CD4-positive, alpha-beta T cell (primary cell): ENCODE measurements at regions of chr4 and their contacts with region 1.

Region 1: DNA sequence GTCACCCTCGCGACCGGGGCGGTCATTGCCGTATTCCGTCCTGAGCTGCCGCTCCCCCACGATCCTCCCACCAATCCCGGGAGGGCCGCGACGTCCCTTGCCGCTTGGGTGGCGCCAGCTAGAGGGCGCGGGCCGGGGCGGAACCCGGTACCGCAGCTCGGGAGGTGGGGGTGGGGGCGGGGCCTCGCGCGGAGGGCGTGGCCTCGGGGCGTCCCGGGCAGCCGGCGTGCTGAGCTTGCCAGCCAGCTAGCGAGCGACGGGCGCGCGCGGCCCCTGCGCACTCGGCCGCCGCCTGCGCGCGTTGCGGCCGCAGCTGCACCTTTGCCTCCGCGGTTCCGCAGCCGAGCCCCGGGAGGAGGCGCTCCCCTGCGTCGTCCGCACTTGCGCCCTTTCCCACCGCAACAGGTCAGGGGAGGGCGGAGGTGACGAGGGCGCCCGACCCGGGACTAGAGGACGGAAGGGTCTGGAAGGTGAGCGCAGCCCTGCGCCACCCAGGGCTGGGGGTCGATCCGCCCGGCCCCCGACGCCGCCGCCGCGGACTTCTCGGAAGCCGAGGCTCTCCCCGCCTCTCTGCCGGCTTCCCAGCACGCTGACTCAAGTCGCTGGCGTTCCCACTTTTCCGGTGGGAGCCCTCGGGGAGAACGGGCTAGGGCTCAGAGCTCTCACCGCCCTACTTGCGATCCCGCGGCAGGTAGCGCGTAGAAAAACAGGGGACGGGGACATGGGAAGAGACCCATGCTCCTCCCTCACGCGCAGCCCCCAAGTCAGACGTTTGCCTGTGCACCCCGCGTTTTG is at the start of gene AFF1:
- DNase-seq: peak; percentile 73 to 98 (median 82)
- ATAC-seq: peak; percentile 65
- H3K4me3 ChIP-seq: peak within 1 kb of the TSS; percentile 93
- H3K4me3 Mint-ChIP-seq: peak within 1 kb of the TSS; percentile 96
- H3K27ac ChIP-seq: peak within 1 kb of the TSS; percentile 81
- H3K27ac Mint-ChIP-seq: peak within 1 kb of the TSS; percentile 94
- H3K4me1 ChIP-seq: peaks cover 30% of the 10 kb centered on the region
- H3K4me1 Mint-ChIP-seq: peaks cover 52% of the 10 kb centered on the region
- H3K27me3 ChIP-seq: no peaks in the 10 kb centered on the region
- H3K27me3 Mint-ChIP-seq: no peaks in the 10 kb centered on the region
- CTCF ChIP-seq: peak; percentile 47
- total RNA-seq, gene AFF1: 50.3 to 51.2 TPM

Region 2: GRCh38 chr4:86557526-86557925 is 377.4 kb before region 1 on chr4:
- CTCF ChIA-PET with region 1: no interaction called
- POLR2A ChIA-PET with region 1: no interaction called
- intact Hi-C with region 1: no loop called
- DNase-seq: no peak
- ATAC-seq: no peak
- H3K4me3 ChIP-seq: no peak overlapping the region
- H3K4me3 Mint-ChIP-seq: no peak overlapping the region
- H3K27ac ChIP-seq: no peak overlapping the region
- H3K27ac Mint-ChIP-seq: no peak overlapping the region
- H3K4me1 ChIP-seq: peaks cover 6% of the 10 kb centered on the region
- H3K4me1 Mint-ChIP-seq: peaks cover 11% of the 10 kb centered on the region
- H3K27me3 ChIP-seq: no peaks in the 10 kb centered on the region
- H3K27me3 Mint-ChIP-seq: no peaks in the 10 kb centered on the region
- CTCF ChIP-seq: no peak

Region 3: GRCh38 chr4:86831262-86832130 is 103.5 kb before region 1 on chr4:
- CTCF ChIA-PET with region 1: no interaction called
- POLR2A ChIA-PET with region 1: no interaction called
- intact Hi-C with region 1: no loop called
- DNase-seq: no peak
- ATAC-seq: no peak
- H3K4me3 ChIP-seq: no peak overlapping the region
- H3K4me3 Mint-ChIP-seq: no peak overlapping the region
- H3K27ac ChIP-seq: no peak overlapping the region
- H3K27ac Mint-ChIP-seq: no peak overlapping the region
- H3K4me1 ChIP-seq: no peaks in the 10 kb centered on the region
- H3K4me1 Mint-ChIP-seq: no peaks in the 10 kb centered on the region
- H3K27me3 ChIP-seq: no peaks in the 10 kb centered on the region
- H3K27me3 Mint-ChIP-seq: no peaks in the 10 kb centered on the region
- CTCF ChIP-seq: no peak

Region 4: DNA sequence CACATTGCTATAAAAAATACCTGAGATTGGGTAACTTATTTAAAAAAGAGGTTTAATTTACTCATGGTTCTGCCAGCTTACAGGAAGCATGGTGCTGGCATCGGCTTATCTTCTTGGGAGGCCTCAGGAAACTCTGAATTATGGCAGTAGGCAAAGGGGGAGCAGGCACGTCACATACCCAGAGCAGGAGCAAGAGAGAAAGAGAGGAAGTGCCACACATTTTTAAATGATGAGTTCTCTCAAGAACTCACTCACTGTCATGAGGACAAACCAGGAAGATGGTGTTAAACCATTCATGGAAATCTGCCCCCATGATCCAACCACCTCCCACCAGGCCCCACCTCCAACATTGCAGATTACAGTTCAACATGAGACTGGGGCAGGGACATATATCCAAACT is 10.2 kb before region 1 on chr4:
- CTCF ChIA-PET with region 1: interaction called, 48 read pairs
- POLR2A ChIA-PET with region 1: interaction called, 38 read pairs
- intact Hi-C with region 1: no loop called
- DNase-seq: no peak
- ATAC-seq: no peak
- H3K4me3 ChIP-seq: no peak overlapping the region
- H3K4me3 Mint-ChIP-seq: no peak overlapping the region
- H3K27ac ChIP-seq: no peak overlapping the region
- H3K27ac Mint-ChIP-seq: no peak overlapping the region
- H3K4me1 ChIP-seq: peaks cover 2% of the 10 kb centered on the region
- H3K4me1 Mint-ChIP-seq: peaks cover 4% of the 10 kb centered on the region
- H3K27me3 ChIP-seq: no peaks in the 10 kb centered on the region
- H3K27me3 Mint-ChIP-seq: no peaks in the 10 kb centered on the region
- CTCF ChIP-seq: no peak

Region 5: DNA sequence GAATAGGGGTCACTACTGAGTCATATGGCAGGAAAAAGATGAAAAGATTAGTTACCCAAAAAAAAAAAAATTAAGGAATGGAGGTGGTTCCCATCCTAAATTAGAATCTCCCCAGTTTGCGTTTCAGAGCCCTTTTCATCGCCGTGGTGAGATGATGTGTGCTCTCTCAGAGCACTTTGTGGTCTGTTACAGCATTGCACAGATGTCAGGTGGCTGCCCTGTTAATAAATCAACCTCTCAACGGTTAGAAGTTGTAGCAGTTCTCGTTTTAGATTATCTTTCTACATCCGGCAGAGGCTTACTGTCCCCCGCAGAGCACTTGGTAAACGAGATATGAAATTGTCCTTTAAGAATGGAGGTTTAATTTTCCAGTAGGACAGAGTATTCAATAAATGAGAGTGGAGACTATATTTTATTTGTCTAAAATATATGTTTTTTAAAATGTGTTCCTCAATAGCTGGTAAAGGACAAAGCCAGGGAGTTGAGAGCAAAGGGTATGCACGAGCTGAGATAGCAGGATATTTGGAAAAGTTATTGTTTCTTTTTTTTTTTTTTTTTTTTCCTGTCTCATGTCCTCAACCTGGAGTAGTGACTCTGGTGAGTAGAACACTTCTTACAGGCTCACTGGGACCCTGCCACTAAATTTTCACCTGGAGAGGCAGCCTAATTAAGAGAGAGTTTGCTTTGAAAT is 26.8 kb after region 1 on chr4:
- CTCF ChIA-PET with region 1: interaction called, 4 read pairs
- POLR2A ChIA-PET with region 1: interaction called, 3 read pairs
- intact Hi-C with region 1: loop called in 1 of 2 experiments (anchors 2 kb)
- DNase-seq: peak in 2 of 14 experiments; percentile 25 to 33
- ATAC-seq: peak; percentile 78
- H3K4me3 ChIP-seq: no peak overlapping the region
- H3K4me3 Mint-ChIP-seq: peak overlapping the region; percentile 3
- H3K27ac ChIP-seq: no peak overlapping the region
- H3K27ac Mint-ChIP-seq: no peak overlapping the region
- H3K4me1 ChIP-seq: no peaks in the 10 kb centered on the region
- H3K4me1 Mint-ChIP-seq: peaks cover 51% of the 10 kb centered on the region
- H3K27me3 ChIP-seq: no peaks in the 10 kb centered on the region
- H3K27me3 Mint-ChIP-seq: no peaks in the 10 kb centered on the region
- CTCF ChIP-seq: no peak

Region 6: GRCh38 chr4:87006676-87007527 is 71.9 kb after region 1 on chr4:
- CTCF ChIA-PET with region 1: interaction called, 25 read pairs
- POLR2A ChIA-PET with region 1: interaction called, 351 read pairs
- intact Hi-C with region 1: loop called (anchors 1 to 2 kb)
- DNase-seq: peak; percentile 82 to 95 (median 88)
- ATAC-seq: peak; percentile 25
- H3K4me3 ChIP-seq: peak overlapping the region; percentile 89
- H3K4me3 Mint-ChIP-seq: peak overlapping the region; percentile 90
- H3K27ac ChIP-seq: peak overlapping the region; percentile 83 to 90
- H3K27ac Mint-ChIP-seq: peak overlapping the region; percentile 96
- H3K4me1 ChIP-seq: peaks cover 24% of the 10 kb centered on the region
- H3K4me1 Mint-ChIP-seq: peaks cover 58% of the 10 kb centered on the region
- H3K27me3 ChIP-seq: no peaks in the 10 kb centered on the region
- H3K27me3 Mint-ChIP-seq: no peaks in the 10 kb centered on the region
- CTCF ChIP-seq: peak; percentile 65

Region 7: DNA sequence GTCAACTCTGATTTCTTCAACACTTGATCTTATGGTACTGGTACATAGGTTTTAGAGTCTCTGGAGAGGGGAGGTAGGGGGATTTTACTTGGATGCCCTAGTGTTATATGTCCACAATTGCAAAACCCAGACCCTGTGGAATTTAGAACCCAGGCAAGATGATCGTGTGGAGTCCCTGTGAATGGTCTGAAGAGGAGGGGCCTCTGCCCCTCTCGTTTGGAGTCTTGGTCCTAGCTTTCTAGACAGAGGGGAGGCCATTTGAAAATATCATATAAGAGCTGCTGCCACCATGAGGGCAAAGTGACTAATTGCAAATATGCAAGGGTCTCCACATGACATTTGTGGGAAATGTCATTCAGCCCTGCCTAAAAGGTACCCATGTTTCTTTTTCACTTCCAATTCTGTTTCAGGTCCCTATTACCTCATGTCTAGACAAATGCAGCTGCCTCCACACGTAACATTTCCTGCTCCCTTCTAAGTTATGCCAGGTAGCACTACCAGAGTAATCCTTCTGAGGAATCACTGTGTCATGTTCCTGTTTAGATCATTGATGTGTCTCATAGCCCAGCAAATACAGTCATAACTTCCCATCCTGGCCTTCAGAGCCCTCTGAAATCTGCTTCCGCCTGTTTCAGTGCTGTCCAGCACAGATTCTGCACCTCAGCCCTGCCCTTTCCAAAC is 158.6 kb after region 1 on chr4:
- CTCF ChIA-PET with region 1: interaction called, 21 read pairs
- POLR2A ChIA-PET with region 1: interaction called, 12 read pairs
- intact Hi-C with region 1: no loop called
- DNase-seq: peak in 13 of 14 experiments; percentile 5 to 74 (median 30)
- ATAC-seq: peak; percentile 84
- H3K4me3 ChIP-seq: no peak overlapping the region
- H3K4me3 Mint-ChIP-seq: no peak overlapping the region
- H3K27ac ChIP-seq: no peak overlapping the region
- H3K27ac Mint-ChIP-seq: peak overlapping the region; percentile 74
- H3K4me1 ChIP-seq: peaks cover 5% of the 10 kb centered on the region
- H3K4me1 Mint-ChIP-seq: peaks cover 20% of the 10 kb centered on the region
- H3K27me3 ChIP-seq: no peaks in the 10 kb centered on the region
- H3K27me3 Mint-ChIP-seq: no peaks in the 10 kb centered on the region
- CTCF ChIP-seq: peak; percentile 72

Region 8: DNA sequence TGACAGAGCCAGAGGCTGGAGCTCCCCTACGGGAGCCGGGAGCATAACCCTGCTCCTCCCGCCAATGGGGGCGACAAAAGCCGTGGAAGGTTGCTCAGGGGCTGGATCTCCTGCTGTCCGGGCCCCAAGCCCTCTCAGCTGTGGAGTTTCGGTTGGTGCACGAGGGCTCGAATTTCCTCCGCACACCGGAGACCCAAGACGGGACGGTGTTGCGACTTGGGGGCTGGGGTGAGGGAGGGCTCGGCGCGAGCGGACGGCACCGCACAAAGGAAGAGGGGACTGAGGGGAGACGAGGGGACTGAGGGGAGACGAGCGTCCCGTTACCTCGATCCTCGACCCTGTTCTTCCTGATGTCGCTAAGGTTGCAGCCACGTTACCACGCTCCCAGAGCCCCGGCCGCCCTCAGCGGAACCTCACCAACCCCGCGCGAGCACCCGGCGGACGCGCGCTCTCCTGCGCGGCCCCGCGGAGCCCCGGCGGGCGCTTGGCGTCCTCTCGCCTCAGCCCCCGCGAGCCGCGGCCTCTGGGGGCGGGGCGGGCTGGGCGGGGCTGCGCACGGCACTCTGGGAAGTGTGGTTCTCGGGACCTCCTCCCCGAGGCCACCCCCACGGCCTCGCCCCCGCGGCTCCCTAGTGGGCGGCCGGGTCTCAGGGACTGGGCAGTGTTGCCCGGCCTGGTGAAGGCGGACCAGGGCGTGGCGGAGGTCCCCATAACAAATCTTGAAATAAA is 285.3 kb after region 1 on chr4 and contains the start of gene KLHL8:
- CTCF ChIA-PET with region 1: interaction called, 8 read pairs
- POLR2A ChIA-PET with region 1: interaction called, 24 read pairs
- intact Hi-C with region 1: loop called (anchors 1 to 2 kb)
- DNase-seq: peak; percentile 71 to 94 (median 83)
- ATAC-seq: peak; percentile 88
- H3K4me3 ChIP-seq: peak within 1 kb of the TSS; percentile 96
- H3K4me3 Mint-ChIP-seq: peak within 1 kb of the TSS; percentile 96
- H3K27ac ChIP-seq: peak within 1 kb of the TSS; percentile 79 to 88
- H3K27ac Mint-ChIP-seq: peak within 1 kb of the TSS; percentile 88
- H3K4me1 ChIP-seq: peaks cover 24% of the 10 kb centered on the region
- H3K4me1 Mint-ChIP-seq: peaks cover 24% of the 10 kb centered on the region
- H3K27me3 ChIP-seq: no peaks in the 10 kb centered on the region
- H3K27me3 Mint-ChIP-seq: no peaks in the 10 kb centered on the region
- CTCF ChIP-seq: no peak
- total RNA-seq, gene KLHL8: 6.3 to 7.0 TPM

Region 9: GRCh38 chr4:87353592-87353991 is 418.6 kb after region 1 on chr4:
- CTCF ChIA-PET with region 1: no interaction called
- POLR2A ChIA-PET with region 1: no interaction called
- intact Hi-C with region 1: no loop called
- DNase-seq: peak in 13 of 14 experiments; percentile 4 to 63 (median 32)
- ATAC-seq: peak; percentile 74
- H3K4me3 ChIP-seq: no peak overlapping the region
- H3K4me3 Mint-ChIP-seq: no peak overlapping the region
- H3K27ac ChIP-seq: no peak overlapping the region
- H3K27ac Mint-ChIP-seq: no peak overlapping the region
- H3K4me1 ChIP-seq: no peaks in the 10 kb centered on the region
- H3K4me1 Mint-ChIP-seq: peaks cover 6% of the 10 kb centered on the region
- H3K27me3 ChIP-seq: no peaks in the 10 kb centered on the region
- H3K27me3 Mint-ChIP-seq: no peaks in the 10 kb centered on the region
- CTCF ChIP-seq: peak; percentile 81

Region 10: DNA sequence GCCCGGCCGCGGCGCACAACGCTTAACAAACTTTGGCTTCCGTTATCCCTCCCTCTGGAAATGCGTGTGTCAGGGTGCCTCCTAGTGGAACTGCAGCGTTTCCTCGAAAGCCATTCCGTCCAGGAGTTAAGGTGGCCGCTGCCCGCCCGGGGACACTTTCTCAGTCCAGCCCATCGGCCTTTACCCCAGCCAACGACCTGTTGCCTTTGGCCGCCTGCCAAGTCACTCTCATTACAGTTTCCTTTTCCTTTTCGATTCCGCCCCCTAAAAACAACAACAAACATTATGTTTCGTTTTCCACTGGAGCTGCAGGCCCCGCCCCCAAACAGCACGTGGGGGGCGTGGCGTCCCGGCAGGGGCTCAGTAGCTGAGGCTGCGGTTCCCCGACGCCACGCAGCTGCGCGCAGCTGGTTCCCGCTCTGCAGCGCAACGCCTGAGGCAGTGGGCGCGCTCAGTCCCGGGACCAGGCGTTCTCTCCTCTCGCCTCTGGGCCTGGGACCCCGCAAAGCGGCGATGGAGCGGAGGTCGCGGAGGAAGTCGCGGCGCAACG is 1521.9 kb after region 1 on chr4 and contains the start of gene HERC5:
- CTCF ChIA-PET with region 1: no interaction called
- POLR2A ChIA-PET with region 1: interaction called, 5 read pairs
- intact Hi-C with region 1: loop called in 1 of 2 experiments (anchors 10 kb)
- DNase-seq: peak; percentile 83 to 97 (median 90)
- ATAC-seq: peak; percentile 96
- H3K4me3 ChIP-seq: peak within 1 kb of the TSS; percentile 85
- H3K4me3 Mint-ChIP-seq: peak within 1 kb of the TSS; percentile 96
- H3K27ac ChIP-seq: peak within 1 kb of the TSS; percentile 6 to 65
- H3K27ac Mint-ChIP-seq: peak within 1 kb of the TSS; percentile 85
- H3K4me1 ChIP-seq: peaks cover 20% of the 10 kb centered on the region
- H3K4me1 Mint-ChIP-seq: peaks cover 42% of the 10 kb centered on the region
- H3K27me3 ChIP-seq: no peaks in the 10 kb centered on the region
- H3K27me3 Mint-ChIP-seq: no peaks in the 10 kb centered on the region
- CTCF ChIP-seq: peak; percentile 32
- total RNA-seq, gene HERC5: 23.6 to 23.9 TPM